Heart left ventricle (tissue), 16 donors: ENCODE measurements at regions of chr18 and their contacts with region 1.

Region 1: GRCh38 chr18:21815101-21815500 is 74.5 kb downstream of the MIB1 start:
- DNase-seq: no peak
- ATAC-seq: no peak
- H3K4me3 ChIP-seq: no peak overlapping the region
- H3K27ac ChIP-seq: no peak overlapping the region
- H3K4me1 ChIP-seq: no peaks in the 10 kb centered on the region
- H3K27me3 ChIP-seq: no peaks in the 10 kb centered on the region
- CTCF ChIP-seq: no peak
- POLR2A ChIP-seq: no peak

Region 2: DNA sequence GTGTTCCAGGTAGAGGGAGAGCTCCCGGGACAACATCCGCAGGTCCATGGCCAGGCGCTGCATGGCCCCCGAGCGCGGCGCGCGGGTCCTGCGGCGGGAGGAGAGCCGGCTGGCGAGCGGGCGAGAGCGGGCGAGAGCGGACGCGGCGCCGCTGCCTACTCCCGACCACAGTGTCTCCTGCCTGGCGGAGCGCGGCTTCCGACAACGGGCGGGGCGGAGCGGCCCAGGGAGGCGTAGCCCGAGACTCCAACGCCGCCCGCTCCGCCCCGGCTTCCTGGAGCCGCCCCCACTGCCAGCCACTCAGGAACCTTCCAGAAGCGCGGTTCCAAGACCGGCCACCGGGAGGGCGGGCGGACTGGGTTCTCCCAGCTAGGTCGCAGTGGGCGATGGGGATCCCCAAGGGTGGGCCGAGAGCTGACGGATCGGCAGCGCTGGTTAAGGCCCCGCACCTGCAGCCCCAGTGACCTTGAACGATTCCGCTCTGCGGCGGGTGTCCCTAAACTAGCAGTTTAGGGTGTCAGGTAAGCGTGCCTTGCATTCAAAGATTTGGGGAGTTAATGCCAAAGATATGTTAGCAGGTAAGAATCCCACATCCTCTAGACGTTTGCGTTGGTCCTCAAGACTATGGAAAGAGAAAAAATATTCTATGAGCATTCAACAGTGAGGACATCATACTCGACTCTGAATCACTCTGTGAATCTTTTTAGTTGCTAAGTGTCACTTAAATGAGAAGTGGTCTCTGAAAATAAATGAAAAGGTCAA is 110.3 kb before region 1 on chr18 and contains the start of gene ABHD3:
- intact Hi-C with region 1: loop called in 1 of 10 experiments (anchors 5 kb)
- DNase-seq: peak; percentile 94 to 97 (median 95)
- ATAC-seq: peak; percentile 99 to 100 (median 100)
- H3K4me3 ChIP-seq: peak within 1 kb of the TSS; percentile 46 to 99 (median 88)
- H3K27ac ChIP-seq: peak within 1 kb of the TSS; percentile 45 to 97 (median 92)
- H3K4me1 ChIP-seq: peaks cover 0 to 21% (median 7%) of the 10 kb centered on the region in 12 donors
- H3K27me3 ChIP-seq: no peaks in the 10 kb centered on the region
- CTCF ChIP-seq: peak in 11 of 12 donors; percentile 17 to 63 (median 48)
- POLR2A ChIP-seq: peak; percentile 70 to 97
- total RNA-seq, gene ABHD3: 2.1 to 15.6 (median 3.8) TPM

Region 3: DNA sequence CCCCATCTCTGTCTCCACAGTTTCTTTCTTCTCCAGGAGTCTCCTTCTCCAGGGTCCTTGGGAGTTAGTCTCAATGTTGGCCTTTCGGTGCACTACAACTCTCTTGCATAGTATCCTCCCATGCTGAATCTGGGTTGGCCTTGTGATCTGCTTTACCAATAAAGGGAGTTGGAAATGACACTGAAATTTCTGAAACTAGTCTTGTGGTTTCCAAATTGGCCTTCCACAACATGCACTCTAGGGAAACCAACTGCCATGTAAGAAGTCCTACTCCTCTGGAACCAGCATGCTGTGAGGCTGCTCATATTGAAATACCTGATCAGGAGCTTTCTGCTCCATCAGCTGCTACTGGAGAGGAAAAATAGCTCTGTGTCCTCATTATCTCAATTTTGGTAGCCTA is 100.6 kb before region 1 on chr18:
- intact Hi-C with region 1: loop called in 1 of 10 experiments (anchors 10 kb)
- DNase-seq: no peak
- ATAC-seq: no peak
- H3K4me3 ChIP-seq: no peak overlapping the region
- H3K27ac ChIP-seq: no peak overlapping the region
- H3K4me1 ChIP-seq: no peaks in the 10 kb centered on the region
- H3K27me3 ChIP-seq: no peaks in the 10 kb centered on the region
- CTCF ChIP-seq: no peak
- POLR2A ChIP-seq: no peak

Region 4: DNA sequence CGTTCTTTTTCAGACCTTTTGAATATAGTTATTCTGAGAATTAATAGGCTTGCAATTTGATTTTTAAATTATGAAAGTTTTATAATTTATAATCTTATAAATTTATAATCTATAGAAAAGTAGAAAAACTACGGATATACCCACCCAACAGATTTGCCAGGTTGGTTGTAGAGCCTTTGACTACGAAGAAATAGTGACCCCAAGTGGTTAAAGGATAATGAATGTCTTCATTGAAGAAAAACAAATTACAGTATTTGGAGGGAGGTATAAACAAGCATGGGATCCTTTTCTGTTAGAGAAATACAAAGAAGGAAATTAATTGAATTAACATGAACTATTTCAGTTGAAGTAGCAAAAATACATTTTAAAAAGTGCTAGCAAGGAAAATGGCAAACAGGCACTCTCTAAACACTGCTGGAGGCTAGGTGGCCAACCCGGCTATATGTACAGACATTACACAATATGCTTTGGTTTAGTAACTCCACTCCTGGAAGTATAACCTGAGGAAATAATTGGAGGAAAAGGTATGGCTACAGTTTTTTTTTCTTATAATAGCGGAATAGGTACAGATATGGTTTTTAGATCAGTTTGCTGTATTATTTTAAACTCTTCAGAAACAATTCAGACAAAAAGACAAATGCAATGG is 36.3 kb after region 1 on chr18:
- intact Hi-C with region 1: loop called in 5 of 10 experiments (anchors 1 to 5 kb)
- DNase-seq: no peak
- ATAC-seq: peak in 2 of 4 donors; percentile 45 to 63
- H3K4me3 ChIP-seq: no peak overlapping the region
- H3K27ac ChIP-seq: no peak overlapping the region
- H3K4me1 ChIP-seq: peaks cover 0 to 15% (median 0%) of the 10 kb centered on the region in 12 donors
- H3K27me3 ChIP-seq: no peaks in the 10 kb centered on the region
- CTCF ChIP-seq: peak; percentile 25 to 66 (median 44)
- POLR2A ChIP-seq: no peak

Region 5: GRCh38 chr18:21865043-21865442 is 49.9 kb after region 1 on chr18:
- intact Hi-C with region 1: loop called in 1 of 10 experiments (anchors 10 kb)
- DNase-seq: no peak
- ATAC-seq: no peak
- H3K4me3 ChIP-seq: no peak overlapping the region
- H3K27ac ChIP-seq: no peak overlapping the region
- H3K4me1 ChIP-seq: no peaks in the 10 kb centered on the region
- H3K27me3 ChIP-seq: no peaks in the 10 kb centered on the region
- CTCF ChIP-seq: no peak
- POLR2A ChIP-seq: no peak